Aorta (tissue), 5 donors: ENCODE measurements at regions of chr12 and their contacts with region 1.

Region 1: GRCh38 chr12:101299931-101300330 is 20.0 kb downstream of the UTP20 start:
- DNase-seq: no peak
- ATAC-seq: no peak
- H3K4me3 ChIP-seq: no peak overlapping the region
- H3K27ac ChIP-seq: no peak overlapping the region
- H3K4me1 ChIP-seq: no peaks in the 10 kb centered on the region
- H3K27me3 ChIP-seq: no peaks in the 10 kb centered on the region

Region 2: DNA sequence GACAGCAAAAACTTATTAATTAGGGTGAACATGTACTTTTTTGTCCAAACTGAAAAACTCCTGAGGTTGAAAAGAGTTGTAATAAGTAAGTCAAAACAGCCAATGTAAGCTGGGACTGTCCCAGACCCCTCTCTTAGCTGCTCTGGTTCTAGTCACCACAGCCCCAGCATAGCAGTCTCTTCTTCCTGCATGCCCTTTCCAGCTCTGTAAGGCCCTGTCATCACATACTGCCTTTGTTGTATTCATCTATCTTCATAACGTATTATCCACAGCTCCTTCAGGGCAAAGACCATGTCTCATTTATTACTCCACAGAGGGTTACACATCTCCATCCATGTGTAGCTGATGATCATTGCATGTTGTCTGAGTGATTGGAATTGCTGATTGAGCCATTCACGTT is 36.5 kb after region 1 on chr12:
- intact Hi-C with region 1: no loop called
- DNase-seq: no peak
- ATAC-seq: no peak
- H3K4me3 ChIP-seq: no peak overlapping the region
- H3K27ac ChIP-seq: no peak overlapping the region
- H3K4me1 ChIP-seq: no peaks in the 10 kb centered on the region
- H3K27me3 ChIP-seq: no peaks in the 10 kb centered on the region

Region 3: GRCh38 chr12:101372431-101372830 is 72.5 kb after region 1 on chr12:
- intact Hi-C with region 1: loop called in 1 of 2 experiments (anchors 10 kb)
- DNase-seq: no peak
- ATAC-seq: no peak
- H3K4me3 ChIP-seq: no peak overlapping the region
- H3K27ac ChIP-seq: no peak overlapping the region
- H3K4me1 ChIP-seq: no peaks in the 10 kb centered on the region
- H3K27me3 ChIP-seq: no peaks in the 10 kb centered on the region

Region 4: GRCh38 chr12:101564912-101565311 is 265.0 kb after region 1 on chr12:
- intact Hi-C with region 1: no loop called
- DNase-seq: no peak
- ATAC-seq: no peak
- H3K4me3 ChIP-seq: no peak overlapping the region
- H3K27ac ChIP-seq: no peak overlapping the region
- H3K4me1 ChIP-seq: no peaks in the 10 kb centered on the region
- H3K27me3 ChIP-seq: no peaks in the 10 kb centered on the region